Endothelial cell of umbilical vein (primary cell): ENCODE measurements at regions of chr2 and their contacts with region 1.

Region 1: GRCh38 chr2:216215658-216216390 is 106.7 kb downstream of the XRCC5 start:
- DNase-seq: no peak
- H3K4me3 ChIP-seq: no peak overlapping the region
- H3K27ac ChIP-seq: no peak overlapping the region
- H3K4me1 ChIP-seq: peaks cover 32% of the 10 kb centered on the region
- H3K27me3 ChIP-seq: no peaks in the 10 kb centered on the region
- CTCF ChIP-seq: peak; percentile 20 to 23
- POLR2A ChIP-seq: no peak

Region 2: DNA sequence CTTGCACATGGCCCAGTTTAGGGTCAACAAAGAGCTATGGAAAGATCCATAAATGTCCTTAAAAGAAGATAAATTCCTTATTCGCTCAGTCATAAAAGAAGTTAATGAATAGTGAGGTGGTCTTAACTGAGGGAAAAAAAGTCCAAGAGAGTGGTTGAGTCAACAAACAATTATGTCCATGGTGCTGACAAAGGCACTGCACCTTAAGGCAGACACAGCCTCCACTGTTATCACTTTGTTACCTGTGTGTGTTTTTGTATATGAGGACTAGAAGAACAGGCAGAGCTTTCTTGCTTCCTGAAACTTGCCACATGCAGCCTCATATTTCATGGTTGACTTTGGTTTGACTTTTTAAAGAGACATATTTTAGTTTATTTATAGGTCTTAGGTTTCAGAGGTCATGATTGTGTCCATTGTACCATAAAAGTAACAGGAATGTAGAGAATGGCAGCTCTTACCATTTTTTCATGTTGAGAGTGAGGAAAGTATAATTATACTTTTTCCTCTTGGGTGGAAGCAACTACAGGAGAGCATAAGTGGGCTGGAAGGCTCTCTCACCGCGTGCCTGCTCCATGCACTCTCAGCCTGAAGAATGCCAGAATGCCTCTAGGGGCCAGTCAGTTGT is 13.1 kb before region 1 on chr2:
- CTCF ChIA-PET with region 1: interaction called, 4 read pairs
- POLR2A ChIA-PET with region 1: no interaction called
- dilution Hi-C with region 1: no loop called
- intact Hi-C with region 1: loop called (anchors 1 kb)
- DNase-seq: no peak
- H3K4me3 ChIP-seq: no peak overlapping the region
- H3K27ac ChIP-seq: no peak overlapping the region
- H3K4me1 ChIP-seq: no peaks in the 10 kb centered on the region
- H3K27me3 ChIP-seq: no peaks in the 10 kb centered on the region
- CTCF ChIP-seq: no peak
- POLR2A ChIP-seq: no peak

Region 3: DNA sequence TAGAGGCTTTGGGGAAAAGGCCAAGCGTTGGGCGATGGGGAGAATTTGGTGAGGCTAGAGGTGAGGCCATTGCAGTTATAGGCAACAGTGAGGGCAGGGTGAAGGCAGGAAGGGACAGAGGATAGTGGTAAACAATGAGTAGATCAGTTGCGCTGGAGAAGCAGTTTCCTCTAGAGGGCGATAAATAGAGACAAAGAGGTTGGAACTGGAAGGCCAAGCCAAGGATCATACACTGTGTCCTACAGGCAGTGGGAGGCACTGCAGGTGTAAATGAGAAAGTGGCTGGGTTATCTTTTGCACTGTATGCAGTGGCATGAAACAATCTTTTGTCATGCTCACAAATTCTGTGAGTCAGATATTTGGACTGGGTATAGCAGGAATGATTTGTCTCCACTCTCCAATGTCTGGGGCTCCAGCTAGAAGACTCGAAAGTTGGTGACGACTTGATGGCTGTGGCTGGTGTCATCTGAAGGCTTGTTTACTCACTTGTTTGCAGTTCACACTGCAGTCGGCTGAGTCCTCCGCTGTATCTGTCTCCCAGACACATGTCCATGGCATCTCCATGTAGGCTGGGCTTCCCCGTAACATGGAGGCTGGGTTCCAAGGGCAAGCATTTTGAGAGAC is 561.9 kb after region 1 on chr2:
- CTCF ChIA-PET with region 1: no interaction called
- POLR2A ChIA-PET with region 1: no interaction called
- dilution Hi-C with region 1: no loop called
- intact Hi-C with region 1: no loop called
- DNase-seq: peak; percentile 33
- H3K4me3 ChIP-seq: no peak overlapping the region
- H3K27ac ChIP-seq: no peak overlapping the region
- H3K4me1 ChIP-seq: no peaks in the 10 kb centered on the region
- H3K27me3 ChIP-seq: no peaks in the 10 kb centered on the region
- CTCF ChIP-seq: peak; percentile 71 to 80
- POLR2A ChIP-seq: no peak